Activated CD4-positive, alpha-beta memory T cell treated with anti-CD3 and anti-CD28 coated beads for 36 hours (primary cell): ENCODE measurements at regions of chr4 and their contacts with region 1.

Region 1: GRCh38 chr4:108172753-108173598 is 4.2 kb upstream of the LEF1 start:
- DNase-seq: peak; percentile 76
- H3K4me3 Mint-ChIP-seq: peak overlapping the region; percentile 85
- H3K27ac Mint-ChIP-seq: peak overlapping the region; percentile 87
- H3K4me1 Mint-ChIP-seq: peaks cover 40% of the 10 kb centered on the region
- H3K27me3 Mint-ChIP-seq: peaks cover 9% of the 10 kb centered on the region

Region 2: GRCh38 chr4:107989537-107990386 is 183.2 kb before region 1 on chr4 and contains the start of gene HADH:
- CTCF ChIA-PET with region 1: no interaction called
- POLR2A ChIA-PET with region 1: interaction called, 3 read pairs
- intact Hi-C with region 1: loop called (anchors 2 kb)
- DNase-seq: peak; percentile 95
- H3K4me3 Mint-ChIP-seq: peak within 1 kb of the TSS; percentile 85
- H3K27ac Mint-ChIP-seq: peak within 1 kb of the TSS; percentile 76
- H3K4me1 Mint-ChIP-seq: peaks cover 36% of the 10 kb centered on the region
- H3K27me3 Mint-ChIP-seq: no peaks in the 10 kb centered on the region
- total RNA-seq, gene HADH: 49.0 to 50.6 TPM

Region 3: GRCh38 chr4:108109997-108110416 is 63.0 kb before region 1 on chr4:
- CTCF ChIA-PET with region 1: interaction called, 6 read pairs
- POLR2A ChIA-PET with region 1: interaction called, 18 read pairs
- intact Hi-C with region 1: loop called (anchors 1 kb)
- DNase-seq: no peak
- H3K4me3 Mint-ChIP-seq: peak overlapping the region; percentile 9
- H3K27ac Mint-ChIP-seq: peak overlapping the region; percentile 68
- H3K4me1 Mint-ChIP-seq: peaks cover 91% of the 10 kb centered on the region
- H3K27me3 Mint-ChIP-seq: no peaks in the 10 kb centered on the region

Region 4: DNA sequence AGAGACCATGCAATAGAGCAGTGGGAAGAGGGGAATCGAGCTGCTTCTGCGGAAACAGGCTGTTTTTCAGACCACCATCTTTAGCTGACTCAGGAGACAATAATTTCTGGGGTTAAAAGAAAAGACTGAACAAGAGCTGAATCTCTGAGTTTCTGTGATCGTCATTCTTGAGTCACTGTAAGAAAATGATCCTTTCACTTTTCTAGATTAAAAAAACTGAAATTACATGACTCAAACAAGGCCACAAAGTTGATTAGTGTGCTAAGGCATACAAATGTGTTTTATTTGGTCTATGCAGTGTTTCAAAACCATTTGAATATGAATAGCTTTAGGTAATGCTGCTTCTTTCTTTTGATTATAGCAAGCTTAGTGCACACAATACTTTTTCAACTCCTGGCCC is 253.0 kb after region 1 on chr4:
- CTCF ChIA-PET with region 1: no interaction called
- POLR2A ChIA-PET with region 1: no interaction called
- intact Hi-C with region 1: loop called (anchors 2 kb)
- DNase-seq: no peak
- H3K4me3 Mint-ChIP-seq: no peak overlapping the region
- H3K27ac Mint-ChIP-seq: no peak overlapping the region
- H3K4me1 Mint-ChIP-seq: peaks cover 22% of the 10 kb centered on the region
- H3K27me3 Mint-ChIP-seq: peaks cover 12% of the 10 kb centered on the region

Region 5: GRCh38 chr4:108483079-108483478 is 310.1 kb after region 1 on chr4:
- CTCF ChIA-PET with region 1: no interaction called
- POLR2A ChIA-PET with region 1: no interaction called
- intact Hi-C with region 1: loop called (anchors 5 kb)
- DNase-seq: peak; percentile 64
- H3K4me3 Mint-ChIP-seq: peak overlapping the region; percentile 17
- H3K27ac Mint-ChIP-seq: no peak overlapping the region
- H3K4me1 Mint-ChIP-seq: peaks cover 27% of the 10 kb centered on the region
- H3K27me3 Mint-ChIP-seq: no peaks in the 10 kb centered on the region

Region 6: GRCh38 chr4:109559983-109560686 is 1387.2 kb after region 1 on chr4 and contains the start of gene MCUB:
- CTCF ChIA-PET with region 1: no interaction called
- POLR2A ChIA-PET with region 1: no interaction called
- intact Hi-C with region 1: loop called (anchors 10 kb)
- DNase-seq: peak; percentile 95
- H3K4me3 Mint-ChIP-seq: peak within 1 kb of the TSS; percentile 84
- H3K27ac Mint-ChIP-seq: peak within 1 kb of the TSS; percentile 92
- H3K4me1 Mint-ChIP-seq: peaks cover 52% of the 10 kb centered on the region
- H3K27me3 Mint-ChIP-seq: no peaks in the 10 kb centered on the region
- total RNA-seq, gene MCUB: 76.7 to 80.5 TPM